ENCODE measurements at regions of chr3 and their contacts with region 1.

Region 1: DNA sequence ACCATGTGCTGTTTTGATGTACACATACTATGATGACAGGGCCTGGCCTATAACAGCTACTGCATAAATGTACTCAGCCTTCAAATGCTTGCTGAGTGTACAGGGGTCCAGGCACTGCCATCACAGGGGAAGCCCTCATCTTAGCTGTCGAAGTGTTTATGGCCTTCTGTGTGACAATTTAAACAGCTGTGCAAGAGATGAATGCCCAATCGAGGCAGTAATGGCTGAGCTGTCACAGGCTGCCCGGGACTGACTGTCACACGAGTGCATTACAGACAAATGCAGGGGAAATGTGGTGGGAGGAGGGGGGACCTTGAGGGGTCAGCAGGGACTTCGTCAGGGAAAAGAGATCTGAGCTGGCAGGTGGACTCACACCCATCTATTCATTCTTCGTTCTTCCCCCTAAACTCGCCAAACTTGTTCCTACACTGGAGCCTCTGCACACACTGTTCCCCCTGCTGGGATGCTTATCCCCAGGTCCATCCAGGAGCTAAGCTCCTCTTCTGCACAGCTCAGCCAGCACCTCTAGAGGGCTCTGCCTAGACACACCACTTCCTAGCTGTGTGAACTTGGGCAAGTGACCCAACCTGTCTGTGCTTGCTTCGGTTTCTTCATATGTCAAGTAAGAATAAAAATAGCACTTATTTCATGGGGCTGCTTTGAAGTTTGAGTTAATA is 156.2 kb upstream of the IQSEC1 start:
- DNase-seq: peak; percentile 53 to 58
- ATAC-seq: peak; percentile 92 to 95
- H3K4me3 ChIP-seq: no peak overlapping the region
- H3K27ac ChIP-seq: no peak overlapping the region
- H3K4me1 ChIP-seq: no peaks in the 10 kb centered on the region
- CTCF ChIP-seq: peak; percentile 40
- EP300 ChIP-seq: no peak
- POLR2A ChIP-seq: no peak
- RAD21 ChIP-seq: peak in 1 of 2 experiments; percentile 57; a peak in 2 of 5 replicates

Region 2: GRCh38 chr3:13241621-13242363 is 12.4 kb after region 1 on chr3:
- CTCF ChIA-PET with region 1: interaction called, 22 read pairs
- POLR2A ChIA-PET with region 1: no interaction called
- DNase-seq: no peak
- ATAC-seq: no peak
- H3K4me3 ChIP-seq: no peak overlapping the region
- H3K27ac ChIP-seq: no peak overlapping the region
- H3K4me1 ChIP-seq: no peaks in the 10 kb centered on the region
- CTCF ChIP-seq: no peak
- EP300 ChIP-seq: no peak
- POLR2A ChIP-seq: no peak
- RAD21 ChIP-seq: no peak

Region 3: GRCh38 chr3:13316603-13317002 is 87.2 kb after region 1 on chr3:
- CTCF ChIA-PET with region 1: no interaction called
- POLR2A ChIA-PET with region 1: no interaction called
- DNase-seq: no peak
- ATAC-seq: no peak
- H3K4me3 ChIP-seq: no peak overlapping the region
- H3K27ac ChIP-seq: no peak overlapping the region
- H3K4me1 ChIP-seq: no peaks in the 10 kb centered on the region
- CTCF ChIP-seq: no peak
- EP300 ChIP-seq: no peak
- POLR2A ChIP-seq: no peak
- RAD21 ChIP-seq: no peak

Measured in A549 (cell line).